Esophagus muscularis mucosa (tissue), 4 donors: ENCODE measurements at regions of chr1 and their contacts with region 1.

Region 1: DNA sequence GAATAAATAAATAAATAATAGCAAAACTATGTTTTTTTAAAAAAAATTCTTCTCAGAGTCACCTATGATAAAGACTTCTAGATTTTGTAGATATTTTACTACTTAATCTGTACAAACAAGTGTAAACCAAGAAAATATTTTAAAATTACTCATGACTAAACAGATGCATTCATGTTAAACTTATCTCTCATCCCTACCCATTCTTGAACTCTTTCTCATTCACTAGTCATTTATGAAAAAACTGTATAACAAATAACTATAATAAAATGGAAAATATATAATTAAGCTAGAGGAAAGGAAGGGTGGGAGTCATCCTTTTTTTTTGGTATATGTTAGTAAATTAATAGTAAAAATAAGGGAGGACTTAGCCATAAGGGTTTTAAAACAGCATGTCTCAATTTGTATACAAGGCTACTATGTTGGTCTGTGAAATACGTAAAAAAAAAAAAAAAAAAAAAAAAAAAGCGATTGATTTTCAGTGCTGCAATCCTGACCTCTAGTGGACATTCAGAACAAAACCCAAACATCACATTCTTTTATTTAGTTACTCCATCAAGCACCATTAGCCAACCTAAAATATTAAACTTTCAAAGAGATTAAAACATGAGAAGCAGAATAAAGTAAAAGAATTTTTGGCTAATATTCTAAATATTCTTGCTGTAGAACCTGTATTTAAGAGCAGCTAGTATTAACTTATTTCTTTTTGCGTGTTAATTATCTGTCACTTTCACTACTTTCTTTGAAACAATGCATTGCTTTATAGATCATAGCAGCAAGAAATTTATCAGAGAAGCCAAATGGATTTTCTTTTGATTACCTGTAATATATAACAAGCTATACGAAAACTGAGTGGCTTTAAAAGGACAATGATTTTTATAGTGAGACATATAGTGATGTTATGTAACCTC is 255.8 kb upstream of the CACYBP start:
- DNase-seq: no peak
- H3K4me3 ChIP-seq: no peak overlapping the region
- H3K27ac ChIP-seq: no peak overlapping the region
- H3K4me1 ChIP-seq: peaks cover 0 to 2% (median 0%) of the 10 kb centered on the region in 4 donors
- H3K27me3 ChIP-seq: no peaks in the 10 kb centered on the region
- CTCF ChIP-seq: peak; percentile 58 to 72 (median 63)
- EP300 ChIP-seq: no peak
- POLR2A ChIP-seq: no peak

Region 2: GRCh38 chr1:174262349-174263241 is 481.3 kb before region 1 on chr1:
- intact Hi-C with region 1: loop called (anchors 5 kb)
- DNase-seq: no peak
- H3K4me3 ChIP-seq: no peak overlapping the region
- H3K27ac ChIP-seq: no peak overlapping the region
- H3K4me1 ChIP-seq: peaks cover 5 to 12% (median 9%) of the 10 kb centered on the region in 4 donors
- H3K27me3 ChIP-seq: no peaks in the 10 kb centered on the region
- CTCF ChIP-seq: peak; percentile 49 to 74 (median 58)
- EP300 ChIP-seq: no peak
- POLR2A ChIP-seq: no peak